Left colon (tissue), 2 donors: ENCODE measurements at regions of chr1 and their contacts with region 1.

Region 1: DNA sequence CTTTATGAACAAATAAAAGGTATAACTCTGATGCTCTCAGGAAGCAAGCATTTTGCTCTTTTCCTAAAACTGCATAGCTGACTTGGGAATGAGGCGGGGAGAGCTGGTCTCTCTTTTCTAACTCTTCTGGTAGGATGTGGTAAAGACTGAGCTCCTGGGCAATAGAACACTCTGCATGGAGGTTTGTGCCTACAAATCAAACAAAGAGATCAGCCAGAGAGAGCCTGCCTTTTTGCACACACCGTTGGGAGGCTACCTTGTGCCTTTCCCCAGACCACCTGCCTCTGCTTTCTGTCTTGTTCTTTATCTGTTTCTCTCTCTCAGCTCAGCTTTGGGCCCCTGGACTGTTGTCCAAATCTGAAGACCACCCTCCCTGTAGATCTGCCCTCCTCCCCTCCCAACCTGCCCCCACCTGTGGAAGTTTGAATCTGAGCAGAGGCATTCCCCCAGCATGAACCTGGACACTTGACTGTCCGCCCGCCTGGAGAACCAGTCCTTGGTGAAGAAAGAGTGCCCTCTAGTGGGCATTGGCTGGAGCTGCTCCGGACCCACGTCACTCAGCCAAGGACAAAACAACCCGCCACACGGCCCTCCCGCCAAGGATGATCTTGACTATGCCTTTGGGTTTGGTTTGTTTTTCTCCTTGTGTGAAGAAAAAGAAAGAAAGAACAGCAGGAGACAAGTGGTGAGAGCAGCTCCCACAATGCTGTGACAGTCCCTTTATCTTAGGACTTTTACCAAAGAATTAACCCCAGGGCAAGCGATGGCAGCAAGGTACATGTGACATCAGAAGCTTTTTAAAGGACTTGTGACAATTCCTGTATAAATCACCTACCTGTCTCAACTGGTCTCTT is 228.2 kb downstream of the PBX1 start:
- DNase-seq: peak; percentile 72 to 80
- ATAC-seq: peak; percentile 97

Region 2: DNA sequence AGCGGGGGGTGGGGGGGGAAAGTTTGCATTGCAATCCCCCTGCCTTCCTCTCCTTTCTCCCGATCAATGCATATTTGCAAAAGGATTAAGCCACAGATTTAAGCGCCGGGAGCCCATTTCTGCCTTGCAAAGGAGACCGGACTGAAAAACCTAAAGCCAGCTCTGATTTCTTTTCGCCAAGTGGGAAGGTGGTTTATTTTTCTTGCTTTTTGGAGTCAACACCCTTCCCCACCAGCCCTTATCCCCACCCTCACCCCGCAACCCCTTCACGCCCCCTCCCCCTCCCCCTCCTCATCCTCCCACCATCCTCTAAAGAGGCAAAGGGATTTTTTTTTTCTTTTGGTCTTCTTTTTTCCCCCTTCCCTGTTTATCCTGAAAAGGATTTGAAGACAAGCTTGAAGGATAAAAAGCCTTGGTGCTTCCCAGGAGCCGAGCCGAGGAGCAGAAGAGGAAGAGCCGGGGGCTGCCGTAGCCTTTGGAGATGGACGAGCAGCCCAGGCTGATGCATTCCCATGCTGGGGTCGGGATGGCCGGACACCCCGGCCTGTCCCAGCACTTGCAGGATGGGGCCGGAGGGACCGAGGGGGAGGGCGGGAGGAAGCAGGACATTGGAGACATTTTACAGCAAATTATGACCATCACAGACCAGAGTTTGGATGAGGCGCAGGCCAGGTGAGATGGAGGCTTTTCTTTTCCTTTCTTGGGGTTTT is 227.7 kb before region 1 on chr1:
- intact Hi-C with region 1: loop called in 1 of 2 experiments (anchors 10 kb)
- DNase-seq: peak; percentile 31 to 39
- ATAC-seq: peak; percentile 14

Region 3: GRCh38 chr1:164707868-164708331 is 79.3 kb before region 1 on chr1:
- intact Hi-C with region 1: no loop called
- DNase-seq: no peak
- ATAC-seq: no peak